CD8-positive, alpha-beta T cell (primary cell): ENCODE measurements at regions of chr18 and their contacts with region 1.

Region 1: DNA sequence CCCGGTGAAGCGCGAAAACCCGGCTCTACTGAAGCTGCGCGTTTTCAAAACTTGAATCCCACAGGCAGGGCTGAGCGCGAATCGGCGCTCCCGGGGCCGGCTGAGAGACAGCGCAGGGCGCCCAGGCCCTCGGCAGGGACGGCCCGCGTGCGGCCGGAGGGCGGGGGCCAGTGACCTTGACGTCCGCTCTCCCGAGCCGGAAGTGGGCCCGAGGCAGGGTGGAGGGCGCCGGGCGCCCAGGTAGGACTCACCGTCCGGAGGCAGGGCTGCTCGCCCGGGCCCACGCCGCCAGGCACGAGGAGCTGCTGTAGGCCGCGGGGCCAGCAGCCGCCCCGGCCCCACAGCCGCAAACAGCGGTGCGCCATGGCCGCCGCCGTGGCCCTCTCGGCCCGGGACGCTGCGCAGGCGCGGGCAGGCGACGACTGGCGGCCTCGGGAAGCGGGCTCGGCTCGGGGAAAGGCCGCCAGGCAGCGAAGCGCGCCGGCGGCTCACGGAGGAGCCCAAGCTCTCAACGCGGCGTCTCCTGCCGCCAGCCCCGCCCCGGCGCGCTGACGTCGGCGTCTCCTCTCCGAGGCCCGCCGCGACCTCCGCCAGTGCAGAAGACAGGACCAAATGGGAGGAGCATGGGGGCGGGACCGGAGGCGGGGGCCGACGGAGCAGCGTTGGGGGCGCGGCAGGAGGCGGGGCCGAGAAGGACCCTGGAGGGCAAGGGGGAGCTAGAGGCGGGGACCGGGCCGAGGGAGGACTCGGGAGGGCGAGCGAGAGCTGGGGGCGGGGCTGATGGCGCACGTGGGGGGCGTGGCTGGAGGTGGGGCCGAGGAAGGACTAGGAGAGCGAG is at the start of gene AFG3L2:
- DNase-seq: peak; percentile 100
- ATAC-seq: peak; percentile 88
- H3K4me3 ChIP-seq: peak within 1 kb of the TSS; percentile 81 to 92
- H3K4me3 Mint-ChIP-seq: peak within 1 kb of the TSS; percentile 88
- H3K27ac ChIP-seq: peak within 1 kb of the TSS; percentile 87 to 92
- H3K27ac Mint-ChIP-seq: peak within 1 kb of the TSS; percentile 93
- H3K4me1 ChIP-seq: peaks cover 40% of the 10 kb centered on the region
- H3K4me1 Mint-ChIP-seq: peaks cover 48% of the 10 kb centered on the region
- H3K27me3 ChIP-seq: no peaks in the 10 kb centered on the region
- H3K27me3 Mint-ChIP-seq: no peaks in the 10 kb centered on the region
- CTCF ChIP-seq: no peak
- total RNA-seq, gene AFG3L2: 58.4 to 59.0 TPM

Region 2: DNA sequence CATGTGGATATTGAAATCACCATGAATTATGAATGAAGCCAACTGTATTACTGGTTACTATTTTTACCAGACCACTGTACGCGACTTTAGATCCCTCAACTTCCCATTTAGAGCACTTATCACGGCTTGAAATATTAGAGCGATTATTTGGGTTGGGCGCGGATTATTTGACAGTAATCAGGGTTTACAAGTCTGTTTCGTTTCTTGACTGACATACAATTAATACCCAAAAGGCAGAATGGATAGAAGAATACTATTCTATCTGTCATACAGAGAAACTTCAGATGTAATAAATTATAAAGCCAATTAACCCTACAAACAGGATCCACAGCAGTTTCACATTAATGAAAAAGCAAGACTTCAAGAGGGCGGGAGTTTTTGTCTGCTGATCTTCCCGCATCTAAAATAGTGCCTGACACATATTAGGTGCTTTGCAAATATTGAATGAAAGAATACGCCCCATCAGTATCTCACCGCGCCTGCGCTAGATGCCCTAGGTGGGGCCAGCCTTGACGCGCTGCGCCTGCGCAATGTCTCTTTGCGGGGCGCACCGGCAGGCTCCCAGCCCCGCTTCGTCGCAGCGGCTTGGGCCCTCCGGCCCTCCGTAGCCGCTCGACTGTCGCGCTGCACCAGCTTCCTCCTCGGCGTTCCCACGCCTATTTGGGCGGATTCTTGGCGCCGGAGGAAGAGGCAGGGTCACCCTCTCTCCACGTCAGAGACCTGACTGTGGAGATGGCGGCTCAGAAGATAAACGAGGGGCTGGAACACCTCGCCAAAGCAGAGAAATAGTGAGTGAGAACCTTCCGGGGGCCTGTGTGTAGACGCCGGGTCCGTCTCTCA is 1851.3 kb before region 1 on chr18 and contains the start of gene NAPG:
- CTCF ChIA-PET with region 1: no interaction called
- POLR2A ChIA-PET with region 1: no interaction called
- intact Hi-C with region 1: loop called in 1 of 2 experiments (anchors 10 kb)
- DNase-seq: peak; percentile 78 to 97 (median 88)
- ATAC-seq: peak; percentile 86
- H3K4me3 ChIP-seq: peak within 1 kb of the TSS; percentile 90 to 98
- H3K4me3 Mint-ChIP-seq: peak within 1 kb of the TSS; percentile 97
- H3K27ac ChIP-seq: peak within 1 kb of the TSS; percentile 75 to 87
- H3K27ac Mint-ChIP-seq: peak within 1 kb of the TSS; percentile 96
- H3K4me1 ChIP-seq: peaks cover 31% of the 10 kb centered on the region
- H3K4me1 Mint-ChIP-seq: peaks cover 50% of the 10 kb centered on the region
- H3K27me3 ChIP-seq: no peaks in the 10 kb centered on the region
- H3K27me3 Mint-ChIP-seq: no peaks in the 10 kb centered on the region
- CTCF ChIP-seq: no peak
- total RNA-seq, gene NAPG: 33.2 to 35.8 TPM

Region 3: GRCh38 chr18:11908182-11909060 is 468.5 kb before region 1 on chr18 and contains the start of gene MPPE1:
- CTCF ChIA-PET with region 1: no interaction called
- POLR2A ChIA-PET with region 1: no interaction called
- intact Hi-C with region 1: loop called (anchors 1 to 5 kb)
- DNase-seq: peak; percentile 69 to 93 (median 84)
- ATAC-seq: peak; percentile 90
- H3K4me3 ChIP-seq: peak within 1 kb of the TSS; percentile 85 to 100
- H3K4me3 Mint-ChIP-seq: peak within 1 kb of the TSS; percentile 96
- H3K27ac ChIP-seq: peak within 1 kb of the TSS; percentile 92 to 95
- H3K27ac Mint-ChIP-seq: peak within 1 kb of the TSS; percentile 96
- H3K4me1 ChIP-seq: peaks cover 11% of the 10 kb centered on the region
- H3K4me1 Mint-ChIP-seq: peaks cover 36% of the 10 kb centered on the region
- H3K27me3 ChIP-seq: no peaks in the 10 kb centered on the region
- H3K27me3 Mint-ChIP-seq: no peaks in the 10 kb centered on the region
- CTCF ChIP-seq: no peak
- total RNA-seq, gene MPPE1: 44.0 to 55.1 TPM

Region 4: GRCh38 chr18:12362473-12363174 is 14.3 kb before region 1 on chr18:
- CTCF ChIA-PET with region 1: no interaction called
- POLR2A ChIA-PET with region 1: no interaction called
- intact Hi-C with region 1: no loop called
- DNase-seq: no peak
- ATAC-seq: no peak
- H3K4me3 ChIP-seq: no peak overlapping the region
- H3K4me3 Mint-ChIP-seq: no peak overlapping the region
- H3K27ac ChIP-seq: no peak overlapping the region
- H3K27ac Mint-ChIP-seq: no peak overlapping the region
- H3K4me1 ChIP-seq: no peaks in the 10 kb centered on the region
- H3K4me1 Mint-ChIP-seq: no peaks in the 10 kb centered on the region
- H3K27me3 ChIP-seq: no peaks in the 10 kb centered on the region
- H3K27me3 Mint-ChIP-seq: no peaks in the 10 kb centered on the region
- CTCF ChIP-seq: no peak

Region 5: DNA sequence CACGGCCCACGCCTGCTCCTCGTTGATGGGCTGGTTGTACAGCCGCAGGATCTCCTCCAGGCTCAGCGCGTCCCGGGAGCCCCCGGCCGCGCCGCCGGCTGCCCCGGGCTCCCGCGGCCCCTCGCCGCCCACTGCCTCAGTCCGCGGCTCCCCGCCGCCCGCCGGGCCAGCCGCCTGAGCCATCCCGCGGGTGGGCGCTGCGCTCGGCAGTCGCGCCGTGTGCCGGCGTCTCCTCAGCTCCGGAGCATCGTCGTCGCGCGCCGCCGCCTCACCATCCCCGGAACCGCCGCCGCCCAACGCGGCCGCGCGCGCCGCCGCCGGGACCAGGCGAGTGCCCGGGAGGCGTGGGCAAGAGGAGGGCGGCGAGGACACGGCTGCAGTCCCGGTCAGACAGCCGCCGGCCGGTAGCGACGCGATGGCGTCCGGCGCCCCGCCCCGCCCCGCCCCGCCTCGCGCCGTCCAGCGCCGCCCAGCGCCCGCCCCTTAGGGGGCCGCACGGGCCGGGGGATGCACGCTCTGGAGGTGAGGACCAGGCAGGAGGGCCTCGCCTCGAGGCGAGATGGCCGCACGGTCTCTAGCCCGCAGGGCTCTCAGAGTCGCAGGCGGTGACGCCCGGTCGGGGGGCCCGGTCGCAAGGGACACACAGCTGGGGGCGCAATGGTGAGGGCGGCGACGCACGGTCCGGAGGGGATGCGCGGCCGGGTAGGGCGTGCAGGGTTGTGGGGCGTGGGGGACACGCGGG is 280.9 kb after region 1 on chr18 and contains the start of gene SPIRE1:
- CTCF ChIA-PET with region 1: interaction called, 4 read pairs
- POLR2A ChIA-PET with region 1: no interaction called
- intact Hi-C with region 1: loop called in 1 of 2 experiments (anchors 5 kb)
- DNase-seq: peak in 8 of 9 experiments; percentile 12 to 69 (median 32)
- ATAC-seq: peak; percentile 54
- H3K4me3 ChIP-seq: peak within 1 kb of the TSS; percentile 43 to 45
- H3K4me3 Mint-ChIP-seq: peak within 1 kb of the TSS; percentile 88
- H3K27ac ChIP-seq: no peak within 1 kb of the TSS
- H3K27ac Mint-ChIP-seq: no peak within 1 kb of the TSS
- H3K4me1 ChIP-seq: peaks cover 9% of the 10 kb centered on the region
- H3K4me1 Mint-ChIP-seq: peaks cover 12% of the 10 kb centered on the region
- H3K27me3 ChIP-seq: no peaks in the 10 kb centered on the region
- H3K27me3 Mint-ChIP-seq: peaks cover 11% of the 10 kb centered on the region
- CTCF ChIP-seq: no peak
- total RNA-seq, gene SPIRE1: 0.57 to 0.69 TPM

Region 6: DNA sequence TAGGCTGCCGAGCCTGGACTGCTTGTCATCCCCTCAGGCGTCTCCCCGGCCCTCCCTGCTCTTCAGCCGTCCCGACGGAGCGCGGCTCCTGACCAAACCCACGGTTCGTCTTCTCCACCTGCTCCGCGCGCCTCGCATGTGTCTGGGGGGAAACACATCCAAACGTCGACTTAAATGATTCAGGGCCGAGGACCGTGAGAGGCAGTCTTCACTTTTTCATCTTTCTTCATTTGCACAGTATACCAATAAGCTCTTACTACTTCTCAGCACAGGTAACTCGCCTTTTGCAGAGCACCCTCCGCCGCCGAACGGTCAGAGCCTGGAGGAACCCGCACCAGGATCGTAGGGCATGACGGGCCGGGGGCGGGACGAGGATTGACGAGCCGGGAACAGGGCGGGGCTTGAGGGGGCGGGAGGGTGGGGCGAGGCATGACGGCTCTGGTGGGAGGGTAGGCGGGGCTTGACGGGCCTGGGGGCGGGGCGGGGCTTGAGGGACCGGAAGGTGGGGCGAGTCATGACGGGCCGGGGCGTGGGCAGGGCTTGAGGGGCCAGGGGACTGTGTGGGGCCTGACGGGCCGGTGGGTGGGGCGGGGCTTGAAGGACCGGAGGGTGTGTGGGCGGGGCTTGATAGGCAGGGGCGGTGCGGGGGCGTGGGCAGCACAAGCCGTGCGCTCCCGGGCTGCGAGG is 570.6 kb after region 1 on chr18 and contains the start of gene SEH1L:
- CTCF ChIA-PET with region 1: no interaction called
- POLR2A ChIA-PET with region 1: interaction called, 7 read pairs
- intact Hi-C with region 1: loop called (anchors 1 kb)
- DNase-seq: peak; percentile 97 to 99 (median 99)
- ATAC-seq: peak; percentile 82
- H3K4me3 ChIP-seq: peak within 1 kb of the TSS; percentile 66 to 91
- H3K4me3 Mint-ChIP-seq: peak within 1 kb of the TSS; percentile 96
- H3K27ac ChIP-seq: peak within 1 kb of the TSS; percentile 83 to 85
- H3K27ac Mint-ChIP-seq: peak within 1 kb of the TSS; percentile 99
- H3K4me1 ChIP-seq: peaks cover 22% of the 10 kb centered on the region
- H3K4me1 Mint-ChIP-seq: peaks cover 39% of the 10 kb centered on the region
- H3K27me3 ChIP-seq: no peaks in the 10 kb centered on the region
- H3K27me3 Mint-ChIP-seq: no peaks in the 10 kb centered on the region
- CTCF ChIP-seq: no peak
- total RNA-seq, gene SEH1L: 23.9 to 27.6 TPM

Region 7: GRCh38 chr18:13137670-13138419 is 760.9 kb after region 1 on chr18:
- CTCF ChIA-PET with region 1: no interaction called
- POLR2A ChIA-PET with region 1: no interaction called
- intact Hi-C with region 1: loop called in 1 of 2 experiments (anchors 1 kb)
- DNase-seq: peak; percentile 28 to 90 (median 61)
- ATAC-seq: peak; percentile 73
- H3K4me3 ChIP-seq: peak overlapping the region; percentile 84 to 98
- H3K4me3 Mint-ChIP-seq: peak overlapping the region; percentile 94
- H3K27ac ChIP-seq: peak overlapping the region; percentile 87 to 90
- H3K27ac Mint-ChIP-seq: peak overlapping the region; percentile 96
- H3K4me1 ChIP-seq: peaks cover 20% of the 10 kb centered on the region
- H3K4me1 Mint-ChIP-seq: peaks cover 28% of the 10 kb centered on the region
- H3K27me3 ChIP-seq: no peaks in the 10 kb centered on the region
- H3K27me3 Mint-ChIP-seq: no peaks in the 10 kb centered on the region
- CTCF ChIP-seq: no peak